ENCODE measurements at regions of chr2 and their contacts with region 1.

Region 1: DNA sequence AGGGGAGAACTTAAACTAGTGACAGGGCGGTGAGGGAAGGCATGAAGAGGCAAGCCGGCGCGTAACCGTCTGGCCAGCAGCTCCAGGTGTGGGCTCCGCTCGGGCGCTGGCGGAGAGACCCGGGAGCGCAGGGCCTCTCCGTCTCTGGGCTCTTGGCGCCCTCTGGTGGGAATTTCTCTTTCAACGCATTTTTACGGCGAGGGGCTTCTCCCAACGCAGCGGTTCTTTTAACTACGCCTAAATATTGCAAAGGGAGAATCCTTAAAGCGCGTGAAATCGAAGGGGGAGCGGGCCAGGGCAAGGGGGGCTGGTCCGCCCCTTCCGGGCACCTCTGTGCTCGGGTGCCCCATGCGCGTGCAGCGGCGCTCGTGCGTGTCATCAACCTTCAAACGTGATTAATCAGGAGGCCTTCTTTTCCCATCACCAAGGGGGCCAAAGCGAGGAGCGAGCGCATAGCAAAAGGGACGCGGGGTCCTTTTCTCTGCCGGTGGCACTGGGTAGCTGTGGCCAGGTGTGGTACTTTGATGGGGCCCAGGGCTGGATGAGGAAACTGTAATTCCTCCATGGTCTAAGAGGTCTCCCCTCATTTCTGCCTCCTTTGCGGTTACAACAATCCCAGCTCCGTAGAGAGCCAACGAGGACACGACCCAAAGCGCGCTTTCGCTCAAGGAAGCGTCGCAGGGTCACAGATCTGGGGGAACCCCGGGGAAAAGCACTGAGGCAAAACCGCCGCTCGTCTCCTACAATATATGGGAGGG is 762 bp upstream of the GAD1 start:
- DNase-seq: peak; percentile 83
- H3K4me3 ChIP-seq: peak overlapping the region; percentile 44
- H3K27ac ChIP-seq: no peak overlapping the region
- H3K4me1 ChIP-seq: peaks cover 19% of the 10 kb centered on the region
- H3K27me3 ChIP-seq: peaks cover 75% of the 10 kb centered on the region
- CTCF ChIP-seq: peak; percentile 81

Region 2: DNA sequence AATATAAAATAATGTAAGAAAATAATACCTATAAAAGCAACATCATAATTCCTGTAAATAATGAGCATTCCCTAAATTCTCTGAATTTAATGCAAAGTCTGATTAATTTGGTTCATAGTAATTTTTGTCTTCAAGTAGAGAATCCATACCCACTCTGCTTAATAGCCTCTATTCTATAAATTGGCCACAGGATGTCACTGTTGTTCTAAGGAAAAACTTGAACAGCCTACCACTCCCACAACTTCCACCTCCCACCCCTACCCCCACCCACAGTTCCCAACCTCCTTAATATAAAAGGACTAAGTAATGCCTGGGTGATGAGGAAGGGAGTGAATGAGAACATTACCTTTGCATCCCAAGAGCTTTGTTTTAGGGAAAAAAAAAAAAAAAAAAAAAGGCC is 1363.8 kb before region 1 on chr2:
- CTCF ChIA-PET with region 1: interaction called, 12 read pairs
- POLR2A ChIA-PET with region 1: no interaction called
- intact Hi-C with region 1: loop called (anchors 5 kb)
- DNase-seq: peak; percentile 71
- H3K4me3 ChIP-seq: no peak overlapping the region
- H3K27ac ChIP-seq: no peak overlapping the region
- H3K4me1 ChIP-seq: no peaks in the 10 kb centered on the region
- H3K27me3 ChIP-seq: no peaks in the 10 kb centered on the region
- CTCF ChIP-seq: peak; percentile 65

Region 3: DNA sequence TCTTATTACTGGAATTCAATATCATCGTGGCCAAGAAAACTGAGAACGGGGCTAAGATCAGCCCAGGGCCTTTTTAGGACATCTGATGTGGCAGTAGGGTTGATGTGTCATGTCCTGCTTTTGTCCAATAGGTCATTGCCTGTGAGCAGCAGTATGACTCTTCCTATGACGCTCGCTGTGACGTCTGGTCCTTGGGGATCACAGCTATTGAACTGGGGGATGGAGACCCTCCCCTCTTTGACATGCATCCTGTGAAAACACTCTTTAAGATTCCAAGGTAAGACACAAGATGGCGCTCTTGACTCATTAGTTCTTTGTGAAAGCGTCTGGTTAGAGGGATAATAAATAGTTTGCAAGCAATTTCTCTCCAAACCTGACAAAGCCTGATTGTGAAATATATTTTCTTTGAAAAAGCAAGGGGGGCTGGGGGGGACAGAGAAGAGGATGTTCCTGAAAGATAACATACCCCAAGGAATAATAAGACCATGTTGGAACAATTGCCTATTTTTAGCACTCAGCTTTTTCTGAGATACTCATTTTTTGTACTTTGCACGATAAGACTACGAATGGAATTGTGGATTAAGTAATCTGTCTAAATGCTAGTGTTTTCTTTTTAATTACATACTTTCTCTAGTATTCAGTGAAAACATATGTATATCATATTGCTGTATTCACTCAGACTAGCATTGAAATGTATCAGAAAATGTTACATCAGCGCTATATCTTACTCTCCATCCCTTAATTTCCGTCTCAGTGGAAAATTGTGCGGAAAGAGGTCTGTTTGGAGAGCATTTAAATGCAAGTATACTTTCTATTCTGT is 579.9 kb before region 1 on chr2:
- CTCF ChIA-PET with region 1: interaction called, 5 read pairs
- POLR2A ChIA-PET with region 1: no interaction called
- intact Hi-C with region 1: loop called (anchors 1 kb)
- DNase-seq: peak; percentile 80
- H3K4me3 ChIP-seq: no peak overlapping the region
- H3K27ac ChIP-seq: no peak overlapping the region
- H3K4me1 ChIP-seq: peaks cover 8% of the 10 kb centered on the region
- H3K27me3 ChIP-seq: peaks cover 9% of the 10 kb centered on the region
- CTCF ChIP-seq: peak; percentile 78

Region 4: DNA sequence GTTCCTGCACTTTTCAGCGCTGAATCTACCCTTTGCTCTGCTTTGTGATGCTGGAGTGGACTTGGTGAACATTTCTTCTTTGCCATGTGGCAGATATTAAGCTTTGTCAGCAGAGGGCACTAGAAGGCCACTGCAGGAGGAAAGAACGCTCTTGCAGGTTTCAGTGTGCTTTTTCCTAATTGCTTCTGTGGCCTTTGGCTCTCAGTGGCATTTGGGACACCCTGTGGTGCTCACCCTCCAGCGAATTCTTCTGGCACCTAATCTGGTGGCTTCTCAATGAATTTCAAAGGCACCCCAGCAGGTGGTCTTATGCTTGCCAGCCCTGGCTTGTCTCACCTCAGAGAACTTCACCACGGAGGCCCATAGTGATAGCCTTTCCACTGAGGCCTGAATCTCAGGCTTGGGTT is 491.3 kb before region 1 on chr2:
- CTCF ChIA-PET with region 1: interaction called, 5 read pairs
- POLR2A ChIA-PET with region 1: no interaction called
- intact Hi-C with region 1: loop called (anchors 1 kb)
- DNase-seq: peak; percentile 74
- H3K4me3 ChIP-seq: no peak overlapping the region
- H3K27ac ChIP-seq: no peak overlapping the region
- H3K4me1 ChIP-seq: no peaks in the 10 kb centered on the region
- H3K27me3 ChIP-seq: no peaks in the 10 kb centered on the region
- CTCF ChIP-seq: peak; percentile 84

Region 5: DNA sequence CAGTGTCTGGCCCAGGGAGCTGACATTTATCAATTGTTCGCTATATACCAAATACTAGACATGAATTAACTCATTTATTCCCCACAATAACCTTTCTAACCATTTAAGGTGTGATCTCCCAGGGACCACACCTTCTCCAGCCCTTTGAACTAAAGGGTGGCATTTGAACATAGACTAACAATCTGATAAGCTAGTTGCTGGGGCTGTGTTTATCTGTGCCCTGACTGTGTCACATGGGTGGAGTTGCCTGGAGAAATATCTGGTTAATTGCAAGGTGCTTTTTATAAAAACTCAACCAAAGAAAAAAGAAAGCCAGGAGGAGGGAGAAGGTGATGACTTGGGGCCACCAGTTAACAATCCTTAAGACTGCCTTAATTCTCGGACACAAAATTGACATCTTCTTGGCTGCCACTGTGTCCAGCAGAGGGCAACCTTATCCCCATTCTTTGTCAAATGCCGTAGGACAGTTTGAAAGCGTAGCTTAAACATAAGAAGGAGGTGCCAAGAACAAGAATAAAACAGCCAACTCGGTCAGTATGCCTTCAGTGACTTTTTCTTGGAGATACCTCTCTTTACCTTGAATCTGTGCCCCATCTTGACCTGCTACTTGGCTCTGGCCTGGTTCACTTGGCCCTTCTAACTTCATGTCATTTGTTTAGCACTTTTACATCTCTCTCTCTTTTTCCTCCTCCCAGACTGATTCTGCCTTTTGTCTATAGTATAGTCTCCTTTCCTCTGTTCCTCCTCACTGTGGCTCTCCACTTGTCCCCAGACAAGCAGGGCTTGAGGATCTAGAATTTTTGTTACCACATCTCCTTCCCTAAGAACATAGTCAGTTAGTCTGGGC is 454.6 kb before region 1 on chr2:
- CTCF ChIA-PET with region 1: interaction called, 16 read pairs
- POLR2A ChIA-PET with region 1: no interaction called
- intact Hi-C with region 1: loop called (anchors 2 kb)
- DNase-seq: peak; percentile 69
- H3K4me3 ChIP-seq: no peak overlapping the region
- H3K27ac ChIP-seq: no peak overlapping the region
- H3K4me1 ChIP-seq: no peaks in the 10 kb centered on the region
- H3K27me3 ChIP-seq: peaks cover 23% of the 10 kb centered on the region
- CTCF ChIP-seq: peak; percentile 77

Region 6: DNA sequence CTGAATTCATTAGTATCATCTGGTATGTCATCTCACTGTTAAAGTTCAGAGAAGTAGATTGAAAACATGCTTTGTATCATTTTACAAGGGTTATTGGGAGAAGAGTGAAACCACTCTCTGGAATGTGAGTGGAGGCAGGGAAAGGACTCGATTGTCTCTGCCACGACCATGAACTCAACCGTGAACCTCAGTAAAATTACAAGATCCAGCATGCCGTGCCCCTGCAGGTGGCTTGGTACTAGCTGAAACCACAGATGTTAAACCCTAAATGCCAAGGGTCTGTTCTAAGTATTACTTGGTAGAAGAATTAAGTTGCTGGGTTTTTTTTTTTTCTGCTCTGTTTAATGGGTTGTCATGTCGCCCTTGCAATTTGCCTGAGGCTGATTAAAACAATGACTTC is 440.7 kb before region 1 on chr2:
- CTCF ChIA-PET with region 1: interaction called, 6 read pairs
- POLR2A ChIA-PET with region 1: no interaction called
- intact Hi-C with region 1: loop called (anchors 2 kb)
- DNase-seq: no peak
- H3K4me3 ChIP-seq: no peak overlapping the region
- H3K27ac ChIP-seq: no peak overlapping the region
- H3K4me1 ChIP-seq: no peaks in the 10 kb centered on the region
- H3K27me3 ChIP-seq: no peaks in the 10 kb centered on the region
- CTCF ChIP-seq: no peak

Measured in A673 (cell line).